ENCODE measurements at regions of chr2 and their contacts with region 1.

Region 1: DNA sequence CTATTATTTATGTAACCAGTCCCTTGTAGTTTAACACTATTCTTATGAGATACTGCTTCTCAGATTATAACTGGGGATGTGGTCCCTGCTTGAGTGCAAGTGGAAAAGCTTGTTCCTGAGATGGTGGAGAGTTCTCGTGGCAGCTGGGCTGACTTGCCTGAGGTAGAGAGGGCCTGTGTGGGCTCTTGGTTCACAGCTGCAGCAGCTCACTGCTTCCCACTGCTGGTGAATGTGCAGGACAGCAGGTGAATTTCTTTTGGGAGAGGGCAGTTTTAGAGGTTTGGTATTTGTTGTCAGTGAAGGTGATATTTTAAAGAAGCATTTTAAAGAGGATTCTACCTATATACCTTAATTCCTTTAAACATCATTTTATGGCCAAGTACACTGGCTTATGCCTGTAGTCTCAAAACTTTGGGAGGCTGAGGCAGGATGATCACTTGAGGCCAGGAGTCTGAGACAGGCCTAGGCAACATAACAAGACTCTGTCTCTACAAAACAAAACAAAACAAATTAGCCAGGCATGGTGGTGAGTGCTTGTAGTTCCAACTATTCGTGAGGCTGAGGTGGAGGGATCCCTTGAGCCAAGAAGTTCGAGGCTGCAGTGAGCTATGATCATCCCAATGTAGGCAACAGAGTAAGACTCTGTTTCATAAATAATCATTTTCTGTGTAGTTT is 94.8 kb downstream of the MTA3 start:
- DNase-seq: peak; percentile 46
- H3K4me3 ChIP-seq: no peak overlapping the region
- H3K27ac ChIP-seq: no peak overlapping the region
- H3K4me1 ChIP-seq: no peaks in the 10 kb centered on the region
- H3K27me3 ChIP-seq: no peaks in the 10 kb centered on the region
- CTCF ChIP-seq: peak; percentile 99

Region 2: GRCh38 chr2:42386684-42387083 is 276.6 kb before region 1 on chr2:
- CTCF ChIA-PET with region 1: no interaction called
- dilution Hi-C with region 1: no loop called
- in situ Hi-C with region 1: no loop called
- intact Hi-C with region 1: loop called (anchors 2 kb)
- DNase-seq: no peak
- H3K4me3 ChIP-seq: no peak overlapping the region
- H3K27ac ChIP-seq: no peak overlapping the region
- H3K4me1 ChIP-seq: no peaks in the 10 kb centered on the region
- H3K27me3 ChIP-seq: no peaks in the 10 kb centered on the region
- CTCF ChIP-seq: peak; percentile 53 to 63

Region 3: GRCh38 chr2:42494355-42495233 is 168.6 kb before region 1 on chr2:
- CTCF ChIA-PET with region 1: no interaction called
- dilution Hi-C with region 1: loop called (anchors 5 kb)
- in situ Hi-C with region 1: no loop called
- intact Hi-C with region 1: loop called (anchors 1 kb)
- DNase-seq: peak; percentile 87
- H3K4me3 ChIP-seq: peak overlapping the region; percentile 49 to 62 (median 50)
- H3K27ac ChIP-seq: no peak overlapping the region
- H3K4me1 ChIP-seq: peaks cover 13% of the 10 kb centered on the region
- H3K27me3 ChIP-seq: peaks cover 29% of the 10 kb centered on the region
- CTCF ChIP-seq: peak; percentile 87 to 91

Region 4: DNA sequence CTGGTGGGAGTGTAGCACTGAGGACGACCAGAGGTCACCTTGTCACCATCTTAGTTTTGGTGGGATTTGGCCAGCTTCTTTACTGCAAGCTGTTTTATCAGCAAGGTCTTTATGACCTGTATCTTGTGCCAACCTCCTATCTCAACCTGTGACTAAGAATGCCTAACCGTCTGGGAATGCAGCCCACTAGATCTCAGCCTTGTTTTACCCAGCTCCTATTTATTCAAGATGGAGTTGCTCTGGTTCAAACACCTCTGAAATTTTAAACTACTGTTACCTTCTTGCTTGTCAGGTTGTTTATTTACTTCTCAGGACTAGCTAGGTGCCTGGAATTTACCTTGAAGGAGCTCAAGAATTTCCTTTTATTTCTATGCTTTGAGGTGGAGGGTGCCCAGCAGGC is 160.0 kb before region 1 on chr2:
- CTCF ChIA-PET with region 1: no interaction called
- dilution Hi-C with region 1: loop called (anchors 5 kb)
- in situ Hi-C with region 1: loop called in 1 of 2 experiments (anchors 10 kb)
- intact Hi-C with region 1: no loop called
- DNase-seq: no peak
- H3K4me3 ChIP-seq: no peak overlapping the region
- H3K27ac ChIP-seq: no peak overlapping the region
- H3K4me1 ChIP-seq: no peaks in the 10 kb centered on the region
- H3K27me3 ChIP-seq: no peaks in the 10 kb centered on the region
- CTCF ChIP-seq: no peak

Region 5: GRCh38 chr2:42513257-42513918 is 149.9 kb before region 1 on chr2:
- CTCF ChIA-PET with region 1: interaction called, 3 read pairs
- dilution Hi-C with region 1: no loop called
- in situ Hi-C with region 1: loop called in 1 of 2 experiments (anchors 10 kb)
- intact Hi-C with region 1: loop called (anchors 1 kb)
- DNase-seq: peak; percentile 43
- H3K4me3 ChIP-seq: no peak overlapping the region
- H3K27ac ChIP-seq: no peak overlapping the region
- H3K4me1 ChIP-seq: no peaks in the 10 kb centered on the region
- H3K27me3 ChIP-seq: no peaks in the 10 kb centered on the region
- CTCF ChIP-seq: peak; percentile 62 to 83

Region 6: DNA sequence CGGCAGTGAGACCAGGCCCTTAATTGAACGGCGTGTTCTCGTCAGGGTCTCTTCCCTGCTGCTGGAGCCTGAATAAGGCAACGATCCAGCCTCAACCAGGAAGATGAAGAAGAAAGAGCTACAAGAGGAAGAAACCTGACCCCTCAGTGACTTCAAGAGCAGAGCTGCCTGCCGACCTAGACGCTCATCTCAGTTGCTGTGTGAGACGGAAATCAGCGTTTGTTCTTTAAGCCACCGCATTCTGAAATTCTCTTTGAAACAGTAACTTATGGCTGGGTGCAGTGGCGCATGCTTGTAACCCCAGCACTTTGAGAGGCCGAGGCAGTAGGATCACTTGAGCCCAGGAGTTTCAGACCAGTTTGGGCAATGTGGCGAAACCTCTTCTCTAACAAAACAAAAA is 139.9 kb before region 1 on chr2:
- CTCF ChIA-PET with region 1: interaction called, 4 read pairs
- dilution Hi-C with region 1: no loop called
- in situ Hi-C with region 1: loop called in 1 of 2 experiments (anchors 10 kb)
- intact Hi-C with region 1: no loop called
- DNase-seq: no peak
- H3K4me3 ChIP-seq: no peak overlapping the region
- H3K27ac ChIP-seq: no peak overlapping the region
- H3K4me1 ChIP-seq: no peaks in the 10 kb centered on the region
- H3K27me3 ChIP-seq: peaks cover 3% of the 10 kb centered on the region
- CTCF ChIP-seq: no peak

Region 7: DNA sequence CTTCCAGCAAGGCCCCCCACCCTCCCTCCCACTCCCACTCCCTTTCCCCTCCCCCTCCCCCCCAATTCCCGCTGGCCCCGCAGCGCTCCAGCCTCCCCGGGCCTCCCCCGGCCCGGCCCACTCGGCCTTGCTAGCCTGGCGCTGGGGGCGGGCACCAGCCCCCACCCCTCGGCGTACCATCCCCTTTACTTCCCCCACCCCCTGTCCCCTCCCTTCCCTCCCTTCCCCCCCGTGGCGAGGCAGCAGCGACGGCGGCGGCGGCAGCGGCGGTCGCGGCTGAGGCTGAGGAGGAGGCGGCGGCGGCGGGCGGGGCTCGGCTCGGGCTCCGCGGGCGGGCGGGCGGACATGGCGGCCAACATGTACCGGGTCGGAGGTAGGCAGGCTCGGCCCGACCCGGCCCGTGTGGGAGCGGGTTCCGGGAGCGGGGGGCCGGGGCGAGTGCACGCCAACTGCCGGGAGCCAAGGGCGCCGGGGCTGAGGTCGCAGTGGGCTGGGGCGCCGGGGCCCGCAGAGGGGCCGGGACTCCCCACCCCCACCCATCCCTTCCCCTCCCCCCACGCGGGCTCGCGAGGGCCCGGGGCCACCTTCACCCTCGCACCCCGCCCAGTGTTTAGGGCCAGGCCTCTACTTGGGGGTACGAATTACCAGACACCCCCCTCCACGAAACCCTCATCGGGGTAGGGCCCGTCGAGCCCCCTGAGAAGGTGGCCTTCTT is 94.7 kb before region 1 on chr2 and contains the start of gene MTA3:
- CTCF ChIA-PET with region 1: no interaction called
- dilution Hi-C with region 1: loop called (anchors 10 kb)
- in situ Hi-C with region 1: no loop called
- intact Hi-C with region 1: no loop called
- DNase-seq: no peak
- H3K4me3 ChIP-seq: peak within 1 kb of the TSS; percentile 69 to 88 (median 73)
- H3K27ac ChIP-seq: no peak within 1 kb of the TSS
- H3K4me1 ChIP-seq: peaks cover 15% of the 10 kb centered on the region
- H3K27me3 ChIP-seq: no peaks in the 10 kb centered on the region
- CTCF ChIP-seq: no peak
- total RNA-seq, gene MTA3: 38.0 to 40.4 TPM